Left colon (tissue), 2 donors: ENCODE measurements at regions of chr7 and their contacts with region 1.

Region 1: GRCh38 chr7:51366930-51367613 is 50.5 kb upstream of the COBL start:
- DNase-seq: peak in 1 of 2 donors; percentile 25
- ATAC-seq: peak; percentile 93

Region 2: DNA sequence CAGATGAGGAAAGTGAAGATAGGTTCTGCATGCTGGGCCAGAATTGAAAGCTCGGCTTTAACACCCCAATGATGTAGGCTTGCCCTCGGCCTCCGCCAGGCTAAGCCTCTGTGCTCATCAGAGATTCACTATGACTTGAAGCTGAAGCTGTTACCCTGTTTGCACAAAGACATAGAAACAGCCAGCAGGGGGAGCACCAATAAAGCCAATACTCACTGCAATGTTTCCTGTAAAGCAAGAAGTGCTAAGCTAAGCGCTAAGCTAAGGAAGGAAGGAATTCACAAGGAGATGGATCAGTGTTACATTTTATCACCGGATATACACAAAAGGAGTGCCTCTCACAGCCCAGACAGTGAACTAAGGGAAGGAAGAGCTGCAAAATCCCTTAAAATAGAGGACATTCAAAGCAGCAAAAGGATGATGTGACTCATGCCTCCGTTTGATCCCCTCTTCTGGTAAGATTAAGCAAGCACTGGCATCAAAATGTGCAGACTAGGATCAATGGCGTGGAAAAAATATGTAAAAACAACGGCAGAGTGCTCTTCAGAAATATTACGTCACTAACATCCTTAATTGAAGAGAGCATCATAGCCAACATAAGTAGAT is 204.2 kb before region 1 on chr7:
- intact Hi-C with region 1: loop called (anchors 5 to 10 kb)
- DNase-seq: peak; percentile 63 to 83
- ATAC-seq: peak; percentile 96

Region 3: DNA sequence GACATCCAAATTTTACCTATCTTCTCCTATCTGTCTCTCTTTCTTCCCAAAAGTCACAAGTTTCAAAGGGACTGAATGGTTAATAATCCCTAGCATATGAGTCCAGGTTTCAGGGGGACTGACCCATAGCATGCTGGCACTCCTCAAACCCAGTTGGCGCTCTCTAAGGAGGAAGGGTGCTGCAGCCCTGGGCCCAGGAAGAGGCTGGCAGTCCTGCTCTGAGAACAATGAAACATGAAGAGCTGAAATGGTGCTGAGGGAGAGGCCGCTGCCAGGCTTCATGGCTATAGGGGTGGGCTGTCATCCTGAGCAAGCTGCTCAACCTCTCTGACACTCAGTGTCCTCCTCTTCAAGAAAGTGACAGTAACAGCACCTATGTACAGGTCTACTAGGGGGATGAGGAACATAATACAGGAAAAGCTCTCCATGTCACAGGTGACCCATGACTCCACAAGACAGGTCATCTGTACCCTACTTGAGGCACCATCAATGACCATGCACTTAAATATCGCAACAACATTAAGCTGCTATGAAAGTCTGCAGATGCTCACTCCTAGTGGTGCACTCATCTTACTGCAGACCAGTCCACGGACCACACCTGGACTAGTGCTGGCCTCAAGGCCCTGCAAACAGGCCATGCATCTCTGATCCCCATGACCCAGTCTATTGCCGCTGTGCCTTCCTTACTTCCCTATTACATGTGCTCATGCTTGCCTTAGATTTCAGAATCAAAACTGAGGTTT is 67.5 kb before region 1 on chr7:
- intact Hi-C with region 1: loop called in 1 of 2 experiments (anchors 10 kb)
- DNase-seq: no peak
- ATAC-seq: no peak